ENCODE measurements at regions of chr20 and their contacts with region 1.

Region 1: DNA sequence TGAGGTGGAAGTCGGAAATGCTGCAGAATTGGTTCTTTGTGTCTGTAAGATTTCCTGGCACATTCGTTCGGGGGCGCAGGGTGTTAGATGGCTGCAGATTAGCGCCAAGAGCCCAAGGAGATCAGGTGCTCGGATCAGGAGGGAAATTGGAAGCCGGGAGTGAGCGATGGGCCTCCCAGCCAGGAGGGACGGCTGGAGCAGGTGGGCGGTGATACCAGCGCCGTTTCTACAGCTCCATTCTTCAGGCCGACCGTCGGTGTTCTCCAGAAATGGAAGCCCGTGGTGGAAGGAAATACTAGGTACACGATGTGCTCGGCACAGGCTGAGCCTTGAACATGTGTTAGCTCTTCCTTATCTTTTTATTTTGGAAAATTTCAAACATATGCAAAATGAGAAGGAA is 6.5 kb downstream of the SIRPA start:
- DNase-seq: no peak
- H3K4me3 ChIP-seq: no peak overlapping the region
- H3K27ac ChIP-seq: no peak overlapping the region
- H3K4me1 ChIP-seq: peaks cover 1% of the 10 kb centered on the region
- H3K27me3 ChIP-seq: no peaks in the 10 kb centered on the region
- CTCF ChIP-seq: no peak
- EP300 ChIP-seq: no peak
- POLR2A ChIP-seq: no peak

Region 2: GRCh38 chr20:1924910-1925861 is 23.5 kb after region 1 on chr20:
- intact Hi-C with region 1: loop called in 1 of 4 experiments (anchors 2 kb)
- DNase-seq: no peak
- H3K4me3 ChIP-seq: no peak overlapping the region
- H3K27ac ChIP-seq: no peak overlapping the region
- H3K4me1 ChIP-seq: no peaks in the 10 kb centered on the region
- H3K27me3 ChIP-seq: no peaks in the 10 kb centered on the region
- CTCF ChIP-seq: no peak
- EP300 ChIP-seq: no peak
- POLR2A ChIP-seq: no peak

Region 3: GRCh38 chr20:2237059-2237458 is 335.4 kb after region 1 on chr20:
- intact Hi-C with region 1: no loop called
- DNase-seq: peak in 4 of 5 donors; percentile 10 to 51 (median 18)
- H3K4me3 ChIP-seq: no peak overlapping the region
- H3K27ac ChIP-seq: no peak overlapping the region
- H3K4me1 ChIP-seq: peaks cover 5% of the 10 kb centered on the region
- H3K27me3 ChIP-seq: no peaks in the 10 kb centered on the region
- CTCF ChIP-seq: no peak
- EP300 ChIP-seq: no peak
- POLR2A ChIP-seq: no peak

Measured in ovary (tissue), 10 donors.